ENCODE measurements at regions of chr3 and their contacts with region 1.

Region 1: GRCh38 chr3:170499565-170500156 is 81.0 kb downstream of the CLDN11 start:
- DNase-seq: peak; percentile 57
- ATAC-seq: peak; percentile 60; the same call in 1 of the 2 replicates
- H3K4me3 ChIP-seq: no peak overlapping the region
- H3K27ac ChIP-seq: no peak overlapping the region
- H3K4me1 ChIP-seq: no peaks in the 10 kb centered on the region; the same call in 1 of the 2 replicates
- H3K27me3 ChIP-seq: no peaks in the 10 kb centered on the region
- CTCF ChIP-seq: peak; percentile 57
- POLR2A ChIP-seq: no peak
- RAD21 ChIP-seq: peak; percentile 56

Region 2: GRCh38 chr3:170368921-170369320 is 130.7 kb before region 1 on chr3:
- CTCF ChIA-PET with region 1: interaction called, 10 read pairs
- POLR2A ChIA-PET with region 1: no interaction called
- dilution Hi-C with region 1: no loop called
- in situ Hi-C with region 1: no loop called
- intact Hi-C with region 1: no loop called
- DNase-seq: no peak
- ATAC-seq: no peak
- H3K4me3 ChIP-seq: no peak overlapping the region
- H3K27ac ChIP-seq: no peak overlapping the region
- H3K4me1 ChIP-seq: 0 out of 2 replicates have a peak, but pooled peaks cover 2% of the 10 kb centered on the region
- H3K27me3 ChIP-seq: no peaks in the 10 kb centered on the region
- CTCF ChIP-seq: peak; percentile 46
- POLR2A ChIP-seq: no peak
- RAD21 ChIP-seq: peak; percentile 31; the same call in 1 of the 2 replicates

Region 3: GRCh38 chr3:170679190-170679589 is 179.5 kb after region 1 on chr3:
- CTCF ChIA-PET with region 1: no interaction called
- POLR2A ChIA-PET with region 1: no interaction called
- dilution Hi-C with region 1: no loop called
- in situ Hi-C with region 1: no loop called
- intact Hi-C with region 1: no loop called
- DNase-seq: no peak
- ATAC-seq: peak; percentile 40; the same call in 1 of the 2 replicates
- H3K4me3 ChIP-seq: no peak overlapping the region
- H3K27ac ChIP-seq: no peak overlapping the region
- H3K4me1 ChIP-seq: no peaks in the 10 kb centered on the region
- H3K27me3 ChIP-seq: no peaks in the 10 kb centered on the region
- CTCF ChIP-seq: no peak
- POLR2A ChIP-seq: no peak
- RAD21 ChIP-seq: no peak

Region 4: GRCh38 chr3:170780955-170781354 is 281.3 kb after region 1 on chr3:
- CTCF ChIA-PET with region 1: no interaction called
- POLR2A ChIA-PET with region 1: no interaction called
- dilution Hi-C with region 1: no loop called
- in situ Hi-C with region 1: no loop called
- intact Hi-C with region 1: no loop called
- DNase-seq: peak; percentile 72
- ATAC-seq: peak; percentile 98
- H3K4me3 ChIP-seq: no peak overlapping the region
- H3K27ac ChIP-seq: peak overlapping the region; percentile 7; the same call in 1 of the 2 replicates
- H3K4me1 ChIP-seq: 0 out of 2 replicates have a peak, but pooled peaks cover 2% of the 10 kb centered on the region
- H3K27me3 ChIP-seq: no peaks in the 10 kb centered on the region
- CTCF ChIP-seq: no peak
- POLR2A ChIP-seq: no peak
- RAD21 ChIP-seq: no peak

Region 5: DNA sequence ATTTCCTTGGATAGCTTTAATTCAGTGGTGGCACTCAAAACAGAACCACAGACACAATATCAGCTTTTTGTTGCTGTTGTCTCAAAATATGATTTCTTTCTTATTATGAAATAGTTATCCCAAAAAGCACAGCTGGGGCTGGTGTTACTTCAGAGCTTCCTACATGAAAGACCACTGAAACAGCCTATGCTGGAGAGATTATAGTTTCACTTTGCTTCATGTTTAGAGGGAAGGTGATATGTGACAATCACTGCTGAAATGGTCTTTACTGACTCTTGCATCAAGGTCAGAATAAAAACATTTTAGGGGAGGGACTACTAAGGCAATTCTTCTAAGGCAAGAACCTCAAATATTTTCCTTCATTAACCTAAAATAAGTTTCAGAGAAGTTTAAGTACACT is 769.9 kb after region 1 on chr3:
- CTCF ChIA-PET with region 1: no interaction called
- POLR2A ChIA-PET with region 1: no interaction called
- dilution Hi-C with region 1: no loop called
- in situ Hi-C with region 1: no loop called
- intact Hi-C with region 1: no loop called
- DNase-seq: no peak
- ATAC-seq: no peak
- H3K4me3 ChIP-seq: no peak overlapping the region
- H3K27ac ChIP-seq: no peak overlapping the region
- H3K4me1 ChIP-seq: peaks cover 2% of the 10 kb centered on the region; the same call in 1 of the 2 replicates
- H3K27me3 ChIP-seq: no peaks in the 10 kb centered on the region; the same call in 1 of the 2 replicates
- CTCF ChIP-seq: no peak
- POLR2A ChIP-seq: no peak
- RAD21 ChIP-seq: no peak